PC-9 (cell line): ENCODE measurements at regions of chr22 and their contacts with region 1.

Region 1: DNA sequence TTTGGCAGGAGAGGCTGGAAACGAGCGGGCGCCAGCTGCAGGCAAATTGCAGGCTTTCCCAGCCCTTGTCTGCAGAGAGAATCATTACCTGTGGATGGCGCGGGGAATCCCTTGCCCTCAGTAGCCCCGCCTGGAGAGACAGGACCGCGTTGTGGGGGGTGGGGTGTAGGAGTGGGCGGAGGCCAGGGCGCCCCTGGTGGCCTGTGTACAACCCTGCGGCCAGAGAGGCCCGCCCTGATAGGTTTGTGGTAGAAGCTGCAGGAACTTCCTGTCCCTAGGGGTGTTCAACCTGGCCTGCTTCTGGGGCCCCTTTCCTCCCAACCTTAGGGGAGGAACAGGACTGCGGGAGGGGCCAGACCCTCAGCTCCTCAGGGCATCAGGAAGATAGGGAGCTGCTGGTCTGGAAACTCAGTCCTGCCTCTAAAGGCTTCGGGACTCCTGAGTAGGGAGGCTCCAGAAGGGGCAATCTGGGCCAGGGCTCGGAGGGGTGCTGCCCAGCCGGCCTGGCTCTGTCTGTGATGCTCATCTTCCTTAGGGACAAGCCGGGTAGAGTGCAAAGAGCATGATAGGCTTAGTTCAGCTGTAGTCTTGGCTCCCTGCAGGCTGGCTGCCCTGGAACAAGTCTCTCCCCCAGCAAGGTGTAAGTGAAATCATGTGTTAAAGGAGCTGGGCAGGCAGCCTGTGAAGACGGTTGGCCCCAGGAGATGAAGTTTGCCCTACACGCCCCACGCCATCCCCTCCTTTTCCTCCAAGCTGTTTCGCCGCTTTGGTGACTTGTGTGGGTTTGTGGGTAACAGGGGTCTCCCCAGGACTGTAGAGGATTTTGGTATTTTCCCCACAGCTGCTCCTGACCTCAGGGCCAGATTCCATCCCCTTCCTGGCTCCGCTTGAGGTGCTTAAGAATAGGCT is 24.1 kb upstream of the SUSD2 start:
- DNase-seq: peak; percentile 72 to 79
- H3K4me3 ChIP-seq: peak overlapping the region; percentile 76
- H3K27ac ChIP-seq: no peak overlapping the region
- H3K4me1 ChIP-seq: peaks cover 14% of the 10 kb centered on the region
- H3K27me3 ChIP-seq: no peaks in the 10 kb centered on the region
- CTCF ChIP-seq: peak; percentile 86

Region 2: GRCh38 chr22:24133187-24133965 is 23.8 kb before region 1 on chr22:
- CTCF ChIA-PET with region 1: no interaction called
- POLR2A ChIA-PET with region 1: no interaction called
- intact Hi-C with region 1: no loop called
- DNase-seq: no peak
- H3K4me3 ChIP-seq: no peak overlapping the region
- H3K27ac ChIP-seq: no peak overlapping the region
- H3K4me1 ChIP-seq: peaks cover 4% of the 10 kb centered on the region; the same call in 1 of the 2 replicates
- H3K27me3 ChIP-seq: no peaks in the 10 kb centered on the region
- CTCF ChIP-seq: peak; percentile 32; the same call in 1 of the 2 replicates

Region 3: DNA sequence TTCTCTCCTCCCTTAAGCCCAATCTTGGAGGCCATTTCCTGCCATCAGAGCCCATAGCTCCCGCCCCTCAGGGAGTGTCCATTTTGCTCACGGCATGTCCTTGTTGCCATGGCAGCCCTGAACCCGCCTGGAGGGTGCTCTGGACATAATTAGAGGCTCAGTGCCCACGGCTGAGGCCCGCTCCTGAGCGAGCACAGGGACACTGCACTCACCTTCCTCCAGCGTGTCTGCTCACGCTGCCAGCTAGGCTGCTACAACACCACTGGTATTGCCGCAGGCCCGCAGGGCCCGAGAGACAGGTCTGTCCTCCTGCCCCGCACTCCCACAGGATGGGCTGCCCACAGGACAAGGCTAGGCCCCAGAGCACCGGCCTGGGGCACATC is 13.1 kb after region 1 on chr22:
- CTCF ChIA-PET with region 1: interaction called, 14 read pairs
- POLR2A ChIA-PET with region 1: interaction called, 17 read pairs
- intact Hi-C with region 1: no loop called
- DNase-seq: no peak
- H3K4me3 ChIP-seq: no peak overlapping the region
- H3K27ac ChIP-seq: no peak overlapping the region
- H3K4me1 ChIP-seq: no peaks in the 10 kb centered on the region
- H3K27me3 ChIP-seq: no peaks in the 10 kb centered on the region
- CTCF ChIP-seq: no peak

Region 4: GRCh38 chr22:24181088-24181995 is 24.2 kb after region 1 on chr22 and contains the start of gene SUSD2:
- CTCF ChIA-PET with region 1: no interaction called
- POLR2A ChIA-PET with region 1: no interaction called
- intact Hi-C with region 1: loop called (anchors 1 kb)
- DNase-seq: no peak
- H3K4me3 ChIP-seq: no peak within 1 kb of the TSS
- H3K27ac ChIP-seq: 0 out of 2 replicates have a peak within 1 kb of the TSS, but pooled peaks have one; percentile 13
- H3K4me1 ChIP-seq: peaks cover 14% of the 10 kb centered on the region
- H3K27me3 ChIP-seq: no peaks in the 10 kb centered on the region
- CTCF ChIP-seq: no peak
- total RNA-seq, gene SUSD2: 5.5 and 5.7 TPM in 2 replicates

Region 5: DNA sequence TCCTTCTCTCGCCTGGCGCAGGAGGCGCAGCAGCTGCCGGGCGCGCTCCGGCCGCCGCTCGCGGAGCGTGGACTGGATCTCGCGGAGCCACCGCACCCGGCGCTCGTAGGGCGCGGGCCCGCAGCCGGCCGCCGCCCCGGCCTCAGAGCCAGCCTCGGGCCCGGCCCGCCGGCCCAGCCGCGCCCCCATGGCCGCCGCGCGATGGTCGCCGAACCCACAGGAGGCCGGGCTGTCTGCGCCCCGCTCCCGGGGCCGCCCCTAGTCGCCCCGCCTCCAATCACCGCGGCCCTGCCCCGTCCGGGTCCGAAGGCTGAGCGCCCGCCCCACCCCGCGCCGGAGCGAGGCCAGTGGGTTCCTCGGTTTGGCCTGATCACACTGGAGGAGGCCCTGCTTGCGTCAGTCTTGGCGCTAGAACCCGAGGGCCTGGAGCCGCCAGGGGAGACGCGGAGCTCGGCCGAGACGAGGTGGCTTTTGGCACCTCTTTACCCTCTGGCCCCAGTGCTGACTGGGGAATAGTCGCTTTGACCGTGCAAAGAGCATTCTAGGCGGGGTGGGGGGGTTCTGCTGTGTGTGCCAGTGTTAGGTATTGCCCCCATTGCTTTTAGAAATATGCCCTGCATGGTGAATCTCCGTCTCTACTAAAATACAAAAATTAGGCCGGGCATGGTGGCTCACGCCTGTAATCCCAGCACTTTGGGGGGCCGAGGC is 435.8 kb after region 1 on chr22 and contains the start of gene LRRC75B:
- CTCF ChIA-PET with region 1: no interaction called
- POLR2A ChIA-PET with region 1: no interaction called
- intact Hi-C with region 1: no loop called
- DNase-seq: peak; percentile 52 to 60
- H3K4me3 ChIP-seq: peak within 1 kb of the TSS; percentile 61; the same call in 1 of the 2 replicates
- H3K27ac ChIP-seq: no peak within 1 kb of the TSS
- H3K4me1 ChIP-seq: peaks cover 12% of the 10 kb centered on the region
- H3K27me3 ChIP-seq: no peaks in the 10 kb centered on the region
- CTCF ChIP-seq: no peak
- total RNA-seq, gene LRRC75B: 2.2 and 4.5 TPM in 2 replicates